Head of caudate nucleus (tissue), 42 donors: ENCODE measurements at regions of chr2 and their contacts with region 1.

Region 1: DNA sequence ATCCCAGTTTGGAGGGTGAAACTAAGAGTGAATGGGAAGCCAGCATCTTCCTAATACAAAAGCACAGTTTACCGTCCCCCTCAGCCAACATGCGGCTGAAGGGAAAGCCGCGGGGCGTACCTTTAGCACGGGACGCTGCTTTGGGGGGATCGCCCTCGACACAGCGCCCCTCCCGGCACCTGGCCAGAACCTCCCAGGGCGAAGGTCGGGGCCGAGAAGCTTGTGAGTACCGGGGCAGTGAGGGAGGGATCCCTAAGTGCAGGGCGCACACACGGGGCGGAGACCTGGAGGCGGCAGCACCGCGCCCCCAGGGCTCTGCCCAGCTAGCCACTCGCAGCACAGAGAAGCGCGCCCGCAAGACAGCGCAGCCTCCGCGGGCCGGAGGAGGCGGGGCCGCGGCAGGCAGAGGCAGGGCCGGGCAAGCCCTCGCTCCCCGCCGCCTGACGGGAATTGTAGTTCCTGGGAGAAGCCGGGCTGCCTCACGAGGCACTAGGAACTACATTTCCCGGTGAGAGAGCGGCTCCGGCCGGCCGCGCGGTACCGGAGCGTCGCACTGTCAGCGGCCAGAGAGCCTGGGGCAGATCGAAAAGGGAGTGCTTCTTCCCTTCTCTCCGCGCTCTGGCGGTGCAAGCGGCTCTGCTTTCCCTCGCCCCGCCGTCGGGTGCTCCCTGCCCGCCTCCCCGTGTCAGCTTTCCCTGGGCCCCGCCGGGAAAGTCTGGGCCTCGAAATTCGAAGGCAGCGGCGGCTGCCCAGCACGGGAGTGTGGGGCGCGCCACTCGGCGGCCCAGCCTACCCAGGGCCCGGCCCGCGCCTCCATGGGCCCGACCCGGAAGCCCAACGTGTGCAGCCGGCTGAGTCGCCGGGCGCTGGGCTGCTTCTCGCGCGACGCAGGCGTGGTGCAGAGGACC is at the starts of genes DCAF17 and METTL8:
- DNase-seq: peak; percentile 91 to 99 (median 97)

Region 2: GRCh38 chr2:170973492-170974303 is 460.3 kb before region 1 on chr2:
- intact Hi-C with region 1: loop called (anchors 5 kb)
- DNase-seq: peak; percentile 55 to 95 (median 88)

Region 3: GRCh38 chr2:171160119-171160955 is 273.7 kb before region 1 on chr2 and contains the start of gene TLK1:
- intact Hi-C with region 1: loop called (anchors 5 kb)
- DNase-seq: peak; percentile 26 to 83 (median 66)

Region 4: DNA sequence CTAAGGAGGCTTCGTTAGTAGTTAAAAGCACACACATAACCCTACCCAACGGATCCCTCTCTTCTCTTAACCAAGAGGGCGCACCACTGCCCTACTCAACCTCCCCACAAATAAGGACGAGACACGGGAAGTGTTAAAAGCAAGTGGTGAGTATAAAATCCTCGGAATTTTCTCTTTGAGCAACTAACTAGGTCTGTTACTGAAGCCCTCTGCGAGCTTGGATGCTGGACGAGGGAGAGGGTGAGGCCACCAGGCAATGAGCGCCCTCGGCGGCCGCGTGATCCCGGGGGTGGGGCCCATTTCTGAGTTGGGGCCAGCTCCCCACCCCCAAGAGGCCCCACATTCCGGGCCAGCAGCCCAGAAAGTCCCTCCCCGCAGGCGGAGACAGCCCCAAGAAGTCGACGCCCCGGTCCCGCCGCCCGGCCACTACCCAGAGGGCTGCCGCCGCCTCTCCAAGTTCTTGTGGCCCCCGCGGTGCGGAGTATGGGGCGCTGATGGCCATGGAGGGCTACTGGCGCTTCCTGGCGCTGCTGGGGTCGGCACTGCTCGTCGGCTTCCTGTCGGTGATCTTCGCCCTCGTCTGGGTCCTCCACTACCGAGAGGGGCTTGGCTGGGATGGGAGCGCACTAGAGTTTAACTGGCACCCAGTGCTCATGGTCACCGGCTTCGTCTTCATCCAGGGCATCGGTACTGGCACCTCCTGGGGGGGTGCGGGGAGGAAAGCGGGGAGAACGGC is 88.2 kb after region 1 on chr2 and contains the start of gene CYBRD1:
- intact Hi-C with region 1: loop called (anchors 5 kb)
- DNase-seq: peak; percentile 78 to 96 (median 90)

Region 5: GRCh38 chr2:171595896-171596295 is 161.9 kb after region 1 on chr2:
- intact Hi-C with region 1: no loop called
- DNase-seq: peak in 1 of 42 donors; percentile 33

Region 6: DNA sequence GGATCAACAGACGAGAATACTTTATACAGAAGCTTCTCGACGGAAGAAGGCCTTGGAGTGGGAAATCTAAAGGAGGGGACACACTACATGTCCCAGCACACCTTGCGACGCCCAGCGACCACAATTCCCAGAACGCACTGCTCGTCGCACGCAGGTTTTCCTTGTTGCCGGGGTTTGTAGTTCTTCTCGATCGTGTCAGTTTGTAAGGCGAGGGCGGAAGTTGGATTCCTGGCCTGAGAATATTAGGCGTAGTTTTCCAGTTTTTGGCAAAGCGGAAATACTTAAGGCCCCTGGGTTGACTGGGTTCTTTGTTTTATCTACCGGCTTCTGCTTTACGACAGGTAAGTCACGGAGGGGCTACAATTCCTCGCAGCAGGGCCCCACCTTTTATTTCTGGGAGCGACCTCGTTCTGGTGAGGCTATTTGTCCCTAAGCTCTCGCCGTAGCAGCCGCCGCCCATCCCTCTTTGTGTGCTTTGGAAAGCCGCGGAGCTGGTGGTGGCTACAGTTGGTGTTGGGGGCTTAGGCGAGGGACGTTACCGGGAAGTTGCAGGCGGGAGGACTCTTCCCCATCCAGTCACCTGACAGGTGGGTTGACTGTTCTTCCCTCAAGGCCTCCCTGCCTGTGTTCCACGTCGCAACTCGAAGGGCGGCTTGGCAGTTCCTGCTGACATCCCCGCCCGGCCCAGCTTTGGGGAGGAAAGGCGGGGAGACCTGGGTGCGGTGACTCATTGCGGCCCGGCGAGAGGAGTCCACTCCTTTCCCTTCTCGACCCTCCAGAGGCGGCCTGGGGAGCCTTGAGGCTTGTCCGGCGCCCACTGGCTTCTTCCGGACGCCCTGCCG is 253.5 kb after region 1 on chr2 and contains the start of gene DYNC1I2:
- intact Hi-C with region 1: loop called (anchors 10 kb)
- DNase-seq: peak; percentile 88 to 98 (median 94)